PC-3 (cell line): ENCODE measurements at regions of chr15 and their contacts with region 1.

Region 1: GRCh38 chr15:57751177-57751800 is 44.8 kb downstream of the POLR2M start:
- DNase-seq: peak; percentile 41
- ATAC-seq: peak; percentile 66; the same call in 1 of the 2 replicates
- H3K4me3 ChIP-seq: no peak overlapping the region
- H3K27ac ChIP-seq: no peak overlapping the region
- H3K4me1 ChIP-seq: no peaks in the 10 kb centered on the region
- H3K27me3 ChIP-seq: no peaks in the 10 kb centered on the region
- CTCF ChIP-seq: peak; percentile 74

Region 2: DNA sequence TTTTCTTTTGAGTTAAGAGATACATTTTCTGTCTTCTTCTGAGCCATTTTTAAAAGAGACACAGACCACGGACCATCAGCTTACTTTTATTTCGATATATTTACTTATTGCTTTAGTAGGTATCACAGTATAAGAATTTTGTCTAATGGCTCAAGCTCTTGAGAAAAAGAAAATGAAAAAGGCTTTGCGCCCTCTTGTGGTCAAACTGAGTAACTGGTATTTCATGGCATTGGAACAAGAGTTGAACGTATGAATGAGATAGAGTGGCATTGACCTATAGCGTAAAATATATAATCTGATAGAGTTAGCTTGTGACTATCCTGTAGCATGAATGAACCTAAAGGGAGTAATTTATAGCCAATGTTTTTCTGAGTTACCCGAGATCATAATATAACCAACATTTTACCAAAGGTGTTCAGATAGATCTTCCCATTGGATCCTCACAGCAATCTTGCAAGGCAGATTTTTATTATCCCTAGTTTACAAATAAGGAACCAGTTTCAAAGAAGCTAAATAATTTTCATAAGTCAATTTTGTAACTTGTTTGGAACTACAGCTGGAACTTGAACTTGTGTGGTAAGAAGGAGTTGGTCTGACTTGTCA is 109.8 kb after region 1 on chr15:
- CTCF ChIA-PET with region 1: interaction called, 37 read pairs
- POLR2A ChIA-PET with region 1: no interaction called
- intact Hi-C with region 1: loop called (anchors 1 kb)
- DNase-seq: peak; percentile 60
- ATAC-seq: peak; percentile 57
- H3K4me3 ChIP-seq: no peak overlapping the region
- H3K27ac ChIP-seq: no peak overlapping the region
- H3K4me1 ChIP-seq: no peaks in the 10 kb centered on the region
- H3K27me3 ChIP-seq: no peaks in the 10 kb centered on the region
- CTCF ChIP-seq: peak; percentile 84

Region 3: GRCh38 chr15:57873564-57874209 is 122.4 kb after region 1 on chr15:
- CTCF ChIA-PET with region 1: interaction called, 10 read pairs
- POLR2A ChIA-PET with region 1: no interaction called
- intact Hi-C with region 1: no loop called
- DNase-seq: peak; percentile 69
- ATAC-seq: peak; percentile 79
- H3K4me3 ChIP-seq: no peak overlapping the region
- H3K27ac ChIP-seq: 0 out of 2 replicates have a peak overlapping the region, but pooled peaks have one; percentile 20
- H3K4me1 ChIP-seq: peaks cover 32% of the 10 kb centered on the region
- H3K27me3 ChIP-seq: no peaks in the 10 kb centered on the region
- CTCF ChIP-seq: no peak

Region 4: DNA sequence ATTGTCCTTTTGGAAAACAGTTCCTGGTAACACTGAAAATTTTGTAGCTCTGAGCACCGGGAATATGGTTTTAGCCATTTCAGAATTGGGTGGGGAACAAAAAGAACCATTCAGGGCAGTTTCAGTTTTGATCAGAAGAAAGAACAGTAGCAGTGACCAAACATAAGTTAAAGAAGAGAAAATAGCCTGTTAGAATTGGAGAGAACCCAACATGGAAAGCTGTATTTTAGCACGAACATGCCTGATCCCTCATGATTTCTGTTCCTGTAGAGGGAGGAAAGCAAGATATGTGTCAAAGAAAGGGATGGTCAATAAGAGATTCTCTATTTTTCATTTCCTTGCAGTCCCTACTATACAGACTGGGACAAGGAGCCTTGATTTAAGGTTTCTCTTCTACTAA is 194.3 kb after region 1 on chr15:
- CTCF ChIA-PET with region 1: interaction called, 10 read pairs
- POLR2A ChIA-PET with region 1: no interaction called
- intact Hi-C with region 1: no loop called
- DNase-seq: no peak
- ATAC-seq: no peak
- H3K4me3 ChIP-seq: no peak overlapping the region
- H3K27ac ChIP-seq: no peak overlapping the region
- H3K4me1 ChIP-seq: no peaks in the 10 kb centered on the region
- H3K27me3 ChIP-seq: no peaks in the 10 kb centered on the region
- CTCF ChIP-seq: no peak

Region 5: DNA sequence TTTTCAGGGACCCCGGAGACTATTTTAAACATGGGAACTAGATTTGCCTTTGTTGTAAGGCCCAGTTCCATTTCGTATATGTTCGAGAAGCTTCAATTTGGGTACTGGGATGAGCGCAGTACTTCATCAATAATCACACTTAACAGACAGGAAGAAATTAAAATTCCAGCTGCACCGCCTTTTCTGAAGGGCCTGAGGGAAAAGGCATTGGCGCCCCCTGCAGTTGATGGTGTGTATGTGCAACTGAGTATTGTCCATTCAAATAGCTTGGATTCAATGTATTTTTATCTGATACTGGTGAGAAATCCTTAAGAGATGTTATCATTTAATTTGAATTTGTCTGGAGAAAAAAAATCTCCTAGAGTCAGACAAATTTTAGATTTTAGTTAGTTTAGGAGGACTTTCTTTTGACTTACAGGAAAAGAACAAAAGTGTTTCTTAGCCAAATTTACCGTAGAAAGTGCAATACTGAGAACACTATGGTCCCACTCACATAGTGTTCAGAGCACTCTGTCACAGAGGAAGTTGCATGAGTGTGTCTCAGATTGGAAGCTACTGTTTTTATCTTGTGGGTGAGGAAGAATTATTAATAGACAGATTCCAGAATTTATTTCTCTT is 319.6 kb after region 1 on chr15:
- CTCF ChIA-PET with region 1: interaction called, 25 read pairs
- POLR2A ChIA-PET with region 1: no interaction called
- intact Hi-C with region 1: loop called (anchors 2 kb)
- DNase-seq: peak; percentile 64
- ATAC-seq: 0 out of 2 replicates have a peak, but pooled peaks have one; percentile 19
- H3K4me3 ChIP-seq: no peak overlapping the region
- H3K27ac ChIP-seq: no peak overlapping the region
- H3K4me1 ChIP-seq: no peaks in the 10 kb centered on the region
- H3K27me3 ChIP-seq: peaks cover 22% of the 10 kb centered on the region; the same call in 1 of the 2 replicates
- CTCF ChIP-seq: peak; percentile 92